Posterior cingulate gyrus (tissue), 11 donors: ENCODE measurements at regions of chr1 and their contacts with region 1.

Region 1: DNA sequence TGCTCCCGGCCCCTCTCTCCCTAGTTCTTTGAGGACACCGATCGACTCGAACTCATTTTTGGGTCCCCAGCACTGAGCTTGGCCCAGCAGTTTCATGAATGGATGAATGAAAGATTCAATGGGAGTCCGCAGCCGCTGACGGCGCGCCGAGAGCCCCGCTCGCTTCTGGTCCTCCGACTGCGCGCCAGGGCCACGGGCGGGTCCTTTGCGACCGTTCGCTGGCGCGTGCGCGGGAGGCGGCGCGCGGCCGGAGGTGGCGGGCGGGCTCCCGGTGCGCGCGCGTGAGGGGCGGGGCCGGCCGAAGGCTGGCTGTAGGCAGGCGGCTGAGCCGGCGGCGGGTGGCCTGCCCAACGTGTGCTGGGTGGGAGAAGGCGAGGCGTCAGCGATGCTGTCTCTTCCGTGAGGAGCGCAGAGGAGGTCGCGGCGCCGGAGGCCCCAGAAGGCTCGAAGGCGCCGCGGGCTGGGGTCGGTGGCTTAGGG is at the start of gene MAST2:
- DNase-seq: peak; percentile 71 to 98 (median 85)

Region 2: DNA sequence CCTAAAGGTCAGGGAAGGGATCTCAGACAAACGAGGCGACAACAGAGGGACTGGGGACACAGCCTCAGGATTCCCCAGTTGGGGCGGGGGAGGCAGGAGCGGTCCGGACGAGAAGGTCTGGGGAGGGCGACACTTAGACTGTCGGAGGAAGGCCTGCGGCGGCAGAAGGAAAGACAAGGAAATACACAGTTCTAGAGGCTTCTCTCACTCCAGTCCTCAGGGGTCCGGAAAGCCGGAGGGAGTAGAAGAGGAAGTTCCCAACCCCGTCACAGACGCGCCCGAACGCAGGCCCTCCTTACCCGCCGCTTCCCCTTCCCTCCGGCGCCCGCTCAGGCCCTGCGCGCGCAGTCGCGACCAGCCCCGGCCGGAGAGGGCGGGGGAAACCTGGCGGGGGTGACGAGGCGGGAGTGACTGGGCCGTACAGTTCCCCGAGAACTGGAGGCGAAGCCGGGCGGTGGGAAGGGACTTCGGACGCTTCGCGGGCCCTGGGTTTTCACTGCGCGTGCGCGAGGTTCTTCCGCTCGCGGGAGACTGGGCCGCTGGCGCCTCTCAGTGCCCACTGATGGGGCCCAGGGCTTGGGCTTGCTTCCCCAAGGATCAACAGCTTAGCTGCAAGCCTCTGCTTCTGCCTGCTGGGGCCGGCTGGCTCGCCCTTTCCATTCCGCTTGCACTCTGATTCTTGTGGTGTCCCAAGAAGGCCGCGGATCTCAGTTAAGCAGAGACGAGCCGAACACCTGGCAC is 52.9 kb before region 1 on chr1 and contains the start of gene IPP:
- intact Hi-C with region 1: loop called (anchors 2 kb)
- DNase-seq: peak; percentile 88 to 99 (median 92)

Region 3: GRCh38 chr1:45864167-45865106 is 61.1 kb after region 1 on chr1:
- intact Hi-C with region 1: no loop called
- DNase-seq: no peak